AG04450 (cell line): ENCODE measurements at regions of chr13 and their contacts with region 1.

Region 1: DNA sequence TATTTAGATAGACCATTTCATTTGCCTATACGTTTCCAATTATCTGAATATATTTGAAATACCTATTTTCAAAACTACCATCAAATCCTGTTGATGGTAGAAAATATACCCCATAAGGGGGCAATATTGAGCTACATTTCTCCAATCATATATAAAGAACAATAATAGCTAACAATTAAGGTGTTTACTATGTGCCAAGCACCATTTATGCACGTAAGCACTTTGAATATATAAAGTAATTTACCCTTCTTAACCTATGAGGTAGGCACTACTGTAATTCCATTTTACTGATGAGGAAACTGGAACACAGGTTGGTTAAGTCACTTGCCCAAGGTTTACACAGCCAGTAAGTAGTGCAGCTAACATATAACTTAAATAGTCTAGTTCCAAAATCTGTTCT is 79.2 kb downstream of the UBL3 start:
- DNase-seq: no peak
- H3K4me3 ChIP-seq: no peak overlapping the region
- H3K27ac ChIP-seq: no peak overlapping the region
- H3K27me3 ChIP-seq: no peaks in the 10 kb centered on the region
- CTCF ChIP-seq: peak; percentile 43

Region 2: GRCh38 chr13:29782798-29783197 is 11.6 kb after region 1 on chr13:
- CTCF ChIA-PET with region 1: interaction called, 10 read pairs
- POLR2A ChIA-PET with region 1: no interaction called
- DNase-seq: no peak
- H3K4me3 ChIP-seq: no peak overlapping the region
- H3K27ac ChIP-seq: no peak overlapping the region
- H3K27me3 ChIP-seq: no peaks in the 10 kb centered on the region
- CTCF ChIP-seq: no peak

Region 3: GRCh38 chr13:29800687-29801086 is 29.4 kb after region 1 on chr13:
- CTCF ChIA-PET with region 1: interaction called, 13 read pairs
- POLR2A ChIA-PET with region 1: no interaction called
- DNase-seq: no peak
- H3K4me3 ChIP-seq: no peak overlapping the region
- H3K27ac ChIP-seq: no peak overlapping the region
- H3K27me3 ChIP-seq: no peaks in the 10 kb centered on the region
- CTCF ChIP-seq: no peak